ENCODE measurements at regions of chr17 and their contacts with region 1.

Region 1: GRCh38 chr17:979538-980405 is at the start of gene NXN:
- DNase-seq: peak; percentile 60 to 91 (median 82)
- H3K4me3 ChIP-seq: peak within 1 kb of the TSS; percentile 46 to 77 (median 66)
- H3K27ac ChIP-seq: peak within 1 kb of the TSS in 54 of 59 donors; percentile 32 to 87 (median 73)
- H3K27me3 ChIP-seq: peaks cover 0 to 8% (median 0%) of the 10 kb centered on the region in 45 donors
- CTCF ChIP-seq: peak in 17 of 56 donors; percentile 5 to 34 (median 17)
- total RNA-seq, gene NXN: 6.9 to 38.1 (median 15.4) TPM

Region 2: DNA sequence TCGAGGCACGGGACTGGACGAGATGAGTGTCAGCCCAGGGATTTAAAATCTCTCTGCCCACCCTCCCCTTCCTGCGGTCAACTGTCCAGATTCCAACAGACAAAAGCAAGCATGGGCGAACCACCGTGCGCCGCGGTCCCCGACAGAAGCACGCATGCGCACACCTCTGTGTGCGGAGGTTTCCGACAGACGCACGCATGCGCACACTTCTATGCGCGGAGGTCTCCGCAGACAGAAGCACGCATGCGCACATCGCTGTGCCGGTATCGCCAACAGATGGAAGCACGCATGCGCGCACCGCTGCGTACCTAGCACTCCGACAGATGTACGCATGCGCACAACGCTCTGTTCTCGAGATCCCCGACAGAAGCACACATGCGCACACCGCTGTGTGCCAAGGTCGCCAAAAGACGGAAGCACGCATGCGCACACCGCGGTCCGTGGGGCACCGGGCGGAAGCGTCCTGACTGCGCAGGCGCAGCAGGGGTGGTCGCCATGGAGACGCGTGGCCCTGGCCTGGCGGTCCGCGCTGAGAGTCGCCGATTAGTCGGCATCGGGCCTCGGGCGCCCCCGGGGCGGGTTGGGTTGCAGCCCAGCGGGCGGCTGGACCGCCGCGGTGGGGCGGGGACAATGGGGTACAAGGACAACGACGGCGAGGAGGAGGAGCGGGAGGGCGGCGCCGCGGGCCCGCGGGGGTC is 569.8 kb before region 1 on chr17:
- intact Hi-C with region 1: loop called (anchors 5 kb)
- DNase-seq: peak; percentile 93 to 97 (median 95)
- H3K4me3 ChIP-seq: peak overlapping the region; percentile 55 to 98 (median 87)
- H3K27ac ChIP-seq: peak overlapping the region; percentile 18 to 96 (median 81)
- H3K27me3 ChIP-seq: no peaks in the 10 kb centered on the region
- CTCF ChIP-seq: peak in 29 of 56 donors; percentile 5 to 58 (median 25)

Region 3: GRCh38 chr17:1055751-1056645 is 76.2 kb after region 1 on chr17:
- intact Hi-C with region 1: loop called in 1 of 2 experiments (anchors 2 kb)
- DNase-seq: peak in 9 of 10 donors; percentile 61 to 81 (median 75)
- H3K4me3 ChIP-seq: no peak overlapping the region
- H3K27ac ChIP-seq: peak overlapping the region in 28 of 59 donors; percentile 1 to 69 (median 46)
- H3K27me3 ChIP-seq: peaks cover 0 to 4% (median 0%) of the 10 kb centered on the region in 45 donors
- CTCF ChIP-seq: peak; percentile 56 to 92 (median 85)

Region 4: GRCh38 chr17:1098387-1098786 is 118.6 kb after region 1 on chr17:
- intact Hi-C with region 1: no loop called
- DNase-seq: no peak
- H3K4me3 ChIP-seq: no peak overlapping the region
- H3K27ac ChIP-seq: peak overlapping the region in 1 of 59 donors; percentile 46
- H3K27me3 ChIP-seq: peaks cover 0 to 2% (median 0%) of the 10 kb centered on the region in 45 donors
- CTCF ChIP-seq: no peak